SK-N-SH (cell line): ENCODE measurements at regions of chr10 and their contacts with region 1.

Region 1: DNA sequence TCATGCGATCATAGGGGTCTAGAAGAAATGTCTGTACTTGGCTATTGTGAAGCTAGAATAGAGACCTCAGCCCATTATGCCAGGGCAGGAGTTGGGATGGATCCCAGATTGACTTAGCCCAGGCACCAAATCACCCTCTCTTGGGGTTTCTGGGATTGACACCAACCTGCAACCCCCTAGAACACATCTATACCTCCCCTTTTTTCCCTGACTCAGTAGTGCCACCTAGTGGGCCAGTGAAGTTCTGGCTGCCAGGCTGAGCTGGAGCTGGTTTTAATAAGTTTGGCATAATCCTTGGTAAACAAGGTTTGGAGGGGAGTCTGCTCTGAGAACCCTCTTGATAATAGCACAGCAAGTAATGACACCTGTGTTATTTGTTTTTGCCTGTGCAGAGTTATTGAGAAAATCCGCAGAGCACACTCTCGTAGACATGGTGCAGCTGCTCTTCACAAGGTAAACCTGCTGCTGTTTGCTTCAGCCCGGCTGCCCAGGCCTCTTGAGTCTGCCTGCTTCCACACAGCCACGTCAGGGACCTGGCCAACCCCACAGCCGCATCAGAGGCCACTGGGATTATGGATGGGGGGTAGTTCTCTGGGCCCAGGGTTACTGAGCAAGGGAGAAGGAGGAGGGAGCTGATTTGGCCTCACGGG is 43.3 kb upstream of the NFKB2 start:
- DNase-seq: peak; percentile 78
- H3K4me3 ChIP-seq: no peak overlapping the region; a peak in 1 of 4 replicates
- H3K27ac ChIP-seq: no peak overlapping the region
- H3K4me1 ChIP-seq: no peaks in the 10 kb centered on the region
- H3K27me3 ChIP-seq: no peaks in the 10 kb centered on the region
- CTCF ChIP-seq: peak; percentile 96
- EP300 ChIP-seq: no peak
- RAD21 ChIP-seq: peak; percentile 83

Region 2: GRCh38 chr10:102208311-102209035 is 143.7 kb before region 1 on chr10:
- CTCF ChIA-PET with region 1: interaction called, 13 read pairs
- POLR2A ChIA-PET with region 1: no interaction called
- DNase-seq: peak; percentile 87
- H3K4me3 ChIP-seq: no peak overlapping the region
- H3K27ac ChIP-seq: peak overlapping the region; percentile 44 to 79; a peak in 3 of 4 replicates
- H3K4me1 ChIP-seq: peaks cover 9 to 14% of the 10 kb centered on the region in 2 experiments; a peak in 3 of 4 replicates
- H3K27me3 ChIP-seq: no peaks in the 10 kb centered on the region
- CTCF ChIP-seq: no peak
- EP300 ChIP-seq: peak in 1 of 2 experiments; percentile 65; a peak in 2 of 4 replicates
- RAD21 ChIP-seq: peak; percentile 26

Region 3: DNA sequence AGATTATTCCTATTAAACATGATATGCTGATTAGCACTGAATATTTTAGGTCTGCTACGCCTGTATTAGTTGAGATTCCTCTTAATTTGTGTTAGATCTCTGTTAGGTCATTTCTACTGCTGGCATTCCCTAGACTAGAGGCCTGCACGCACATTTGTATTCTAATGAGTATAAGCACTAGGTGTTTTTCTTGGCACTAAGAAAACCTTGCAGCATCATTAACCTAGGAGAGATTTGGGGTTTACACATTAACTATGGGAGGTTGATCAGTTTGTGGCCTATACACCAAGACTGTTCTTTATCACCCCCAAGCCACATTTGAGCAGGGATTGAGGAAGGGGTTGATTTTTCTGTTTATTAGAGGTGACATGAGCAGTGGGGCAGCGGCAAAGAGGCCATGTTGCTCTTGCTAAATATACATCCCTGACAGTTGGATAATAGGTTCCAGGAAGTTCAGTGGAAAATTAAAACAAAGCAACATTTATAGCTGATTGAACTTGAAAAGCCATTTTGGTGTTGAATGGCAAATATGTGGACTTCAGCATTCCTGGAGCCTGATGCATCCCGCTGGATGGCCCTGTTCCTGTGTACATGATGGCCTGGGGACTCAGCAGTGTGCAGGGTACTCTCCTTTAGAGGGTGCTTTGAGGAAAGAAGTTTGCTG is 41.7 kb before region 1 on chr10:
- CTCF ChIA-PET with region 1: interaction called, 12 read pairs
- POLR2A ChIA-PET with region 1: no interaction called
- DNase-seq: no peak
- H3K4me3 ChIP-seq: no peak overlapping the region; a peak in 1 of 4 replicates
- H3K27ac ChIP-seq: peak overlapping the region; percentile 65 to 69
- H3K4me1 ChIP-seq: peaks cover 12 to 32% of the 10 kb centered on the region in 2 experiments
- H3K27me3 ChIP-seq: no peaks in the 10 kb centered on the region
- CTCF ChIP-seq: no peak
- EP300 ChIP-seq: peak in 1 of 2 experiments; percentile 39; a peak in 1 of 4 replicates
- RAD21 ChIP-seq: no peak

Region 4: GRCh38 chr10:102334101-102334500 is 18.1 kb before region 1 on chr10:
- CTCF ChIA-PET with region 1: interaction called, 14 read pairs
- POLR2A ChIA-PET with region 1: interaction called, 3 read pairs
- DNase-seq: peak; percentile 54
- H3K4me3 ChIP-seq: no peak overlapping the region
- H3K27ac ChIP-seq: no peak overlapping the region
- H3K4me1 ChIP-seq: peaks cover 0 to 6% of the 10 kb centered on the region in 2 experiments; a peak in 1 of 4 replicates
- H3K27me3 ChIP-seq: no peaks in the 10 kb centered on the region
- CTCF ChIP-seq: no peak
- EP300 ChIP-seq: no peak
- RAD21 ChIP-seq: no peak

Region 5: DNA sequence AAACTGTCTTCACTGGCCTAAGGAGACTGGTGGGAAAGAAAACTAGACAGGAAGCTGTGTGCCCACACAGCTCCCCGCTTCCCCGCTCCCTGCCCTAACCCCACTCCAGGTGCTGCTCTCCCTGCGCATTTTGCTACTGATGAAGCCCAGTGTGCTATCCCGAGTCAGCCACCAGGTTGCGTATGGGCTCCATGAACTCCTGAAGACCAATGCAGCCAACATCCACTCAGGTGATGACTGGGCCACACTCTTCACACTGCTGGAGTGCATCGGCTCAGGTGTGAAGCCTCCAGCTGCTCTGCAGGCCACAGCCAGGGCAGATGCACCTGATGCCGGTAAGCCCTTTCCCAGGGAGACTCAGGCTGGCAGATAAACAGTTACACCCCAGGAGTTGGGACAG is 23.1 kb after region 1 on chr10:
- CTCF ChIA-PET with region 1: interaction called, 67 read pairs
- POLR2A ChIA-PET with region 1: no interaction called
- DNase-seq: no peak
- H3K4me3 ChIP-seq: no peak overlapping the region
- H3K27ac ChIP-seq: no peak overlapping the region
- H3K4me1 ChIP-seq: no peaks in the 10 kb centered on the region
- H3K27me3 ChIP-seq: no peaks in the 10 kb centered on the region
- CTCF ChIP-seq: no peak
- EP300 ChIP-seq: no peak
- RAD21 ChIP-seq: 0 out of 2 replicates have a peak, but pooled peaks have one; percentile 13

Region 6: GRCh38 chr10:102394079-102394800 is 42.0 kb after region 1 on chr10:
- CTCF ChIA-PET with region 1: interaction called, 112 read pairs
- POLR2A ChIA-PET with region 1: no interaction called
- DNase-seq: peak; percentile 92
- H3K4me3 ChIP-seq: peak overlapping the region; percentile 65 to 77
- H3K27ac ChIP-seq: peak overlapping the region; percentile 47 to 81; a peak in 3 of 4 replicates
- H3K4me1 ChIP-seq: peaks cover 0 to 17% of the 10 kb centered on the region in 2 experiments; a peak in 1 of 4 replicates
- H3K27me3 ChIP-seq: no peaks in the 10 kb centered on the region
- CTCF ChIP-seq: no peak; the same call in 1 of the 2 replicates
- EP300 ChIP-seq: no peak
- RAD21 ChIP-seq: no peak

Region 7: DNA sequence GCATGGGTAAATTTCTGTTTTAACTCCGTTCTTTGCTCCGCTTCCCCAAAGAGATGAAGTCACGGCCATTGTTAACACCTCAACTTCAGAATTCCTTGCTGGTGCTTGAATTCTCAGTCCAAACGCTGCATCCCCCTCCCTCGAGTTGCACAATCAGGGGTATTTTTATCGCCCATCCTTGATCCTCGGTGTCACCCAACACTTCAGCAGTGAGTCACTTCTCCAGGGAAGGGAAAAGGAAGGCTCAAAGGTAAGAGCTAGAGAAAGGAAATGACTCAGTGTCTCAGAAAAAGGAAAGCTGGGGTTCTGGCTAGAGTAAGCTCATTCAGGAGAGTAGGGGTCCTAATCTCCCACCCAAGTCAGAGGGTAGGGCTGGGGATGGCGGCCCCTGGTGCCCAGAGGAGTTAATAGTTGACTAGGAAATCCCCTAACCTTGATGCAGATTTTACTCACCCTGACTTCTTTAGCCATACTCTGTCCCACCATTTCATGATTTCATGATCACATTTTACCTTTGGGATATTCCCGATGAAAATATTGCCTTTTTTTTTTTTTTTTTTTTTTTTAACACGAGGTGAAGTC is 252.3 kb after region 1 on chr10:
- CTCF ChIA-PET with region 1: no interaction called
- POLR2A ChIA-PET with region 1: no interaction called
- DNase-seq: no peak
- H3K4me3 ChIP-seq: no peak overlapping the region; a peak in 1 of 4 replicates
- H3K27ac ChIP-seq: peak overlapping the region in 1 of 2 experiments; percentile 79; a peak in 2 of 4 replicates
- H3K4me1 ChIP-seq: peaks cover 0 to 30% of the 10 kb centered on the region in 2 experiments; a peak in 3 of 4 replicates
- H3K27me3 ChIP-seq: no peaks in the 10 kb centered on the region
- CTCF ChIP-seq: no peak
- EP300 ChIP-seq: peak in 1 of 2 experiments; percentile 38; a peak in 1 of 4 replicates
- RAD21 ChIP-seq: no peak